ENCODE measurements at regions of chr5 and their contacts with region 1.

Region 1: DNA sequence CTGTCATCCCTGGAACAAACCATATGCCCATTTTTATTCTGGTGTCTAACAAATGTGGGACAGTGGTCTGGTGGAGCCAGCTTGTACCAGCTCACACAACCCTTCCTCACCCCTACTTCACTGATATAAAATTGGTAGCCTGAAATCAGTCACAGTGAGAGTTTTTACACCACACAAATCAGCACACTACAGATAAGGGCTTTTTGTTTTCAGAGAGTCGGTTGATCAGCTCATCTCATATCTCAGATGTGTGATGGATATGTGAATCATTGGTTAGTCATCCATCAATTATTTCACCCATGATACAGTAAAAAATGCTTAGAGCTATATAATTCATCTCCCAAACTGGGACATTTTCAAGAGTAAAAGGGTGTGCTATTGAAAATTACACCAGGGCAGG is 529.2 kb downstream of the EBF1 start:
- DNase-seq: no peak
- ATAC-seq: no peak

Region 2: GRCh38 chr5:156922207-156922792 is 1648.2 kb before region 1 on chr5:
- intact Hi-C with region 1: no loop called
- DNase-seq: no peak
- ATAC-seq: no peak

Region 3: GRCh38 chr5:158660726-158661125 is 90.2 kb after region 1 on chr5:
- intact Hi-C with region 1: loop called (anchors 10 kb)
- DNase-seq: no peak
- ATAC-seq: no peak

Measured in Right ventricle myocardium superior (tissue), 1 donor.